ENCODE measurements at regions of chr2 and their contacts with region 1.

Region 1: GRCh38 chr2:241315093-241315878 is at the start of gene HDLBP:
- DNase-seq: peak; percentile 96
- ATAC-seq: peak; percentile 80
- H3K4me3 ChIP-seq: peak within 1 kb of the TSS; percentile 90
- H3K27ac ChIP-seq: peak within 1 kb of the TSS; percentile 95
- H3K4me1 ChIP-seq: peaks cover 17% of the 10 kb centered on the region
- H3K27me3 ChIP-seq: no peaks in the 10 kb centered on the region
- CTCF ChIP-seq: peak; percentile 12 to 39 (median 25); a peak in 4 of 6 replicates
- EP300 ChIP-seq: peak; percentile 28 to 30; a peak in 2 of 4 replicates
- POLR2A ChIP-seq: peak; percentile 84
- RAD21 ChIP-seq: 0 out of 2 replicates have a peak, but pooled peaks have one; percentile 4
- polyA plus RNA-seq, gene HDLBP: 19.5 to 56.8 TPM

Region 2: DNA sequence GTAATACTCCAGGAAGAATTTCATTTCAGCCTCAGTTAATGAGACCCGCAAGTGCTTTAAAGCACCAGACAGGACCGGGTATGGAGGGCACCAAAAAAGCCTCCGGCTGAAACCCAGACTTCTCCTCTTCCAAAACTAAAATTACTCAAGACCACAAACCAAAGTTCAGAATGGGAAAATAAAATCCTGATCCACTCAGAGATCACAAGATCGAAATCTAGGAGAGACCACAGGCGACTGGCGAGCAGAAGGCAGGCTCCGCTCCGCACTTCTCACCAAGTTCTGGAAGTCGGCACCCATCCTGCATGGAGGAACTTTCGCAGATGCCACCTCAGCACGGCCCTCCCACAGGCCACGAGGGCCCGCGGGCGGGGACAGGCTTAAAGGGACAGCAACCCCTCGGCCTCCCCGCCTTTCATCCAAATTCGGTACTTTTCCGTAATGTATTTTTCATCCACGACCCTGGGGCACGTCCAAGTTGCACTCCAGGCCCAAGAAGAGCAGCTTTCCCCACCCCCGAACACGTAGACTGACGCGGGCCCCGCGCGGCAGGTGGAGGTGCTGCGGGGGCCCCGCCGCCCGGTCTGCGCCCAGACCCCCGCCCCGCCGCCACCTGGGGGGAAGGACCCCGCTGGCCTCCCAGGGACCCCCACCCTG is 43.5 kb before region 1 on chr2:
- CTCF ChIA-PET with region 1: interaction called, 4 read pairs
- POLR2A ChIA-PET with region 1: no interaction called
- RAD21 ChIA-PET with region 1: interaction called, 3 read pairs
- SMC1A ChIA-PET with region 1: interaction called, 5 read pairs
- in situ Hi-C with region 1: no loop called
- intact Hi-C with region 1: loop called (anchors 2 kb)
- DNase-seq: no peak
- ATAC-seq: peak; percentile 85
- H3K4me3 ChIP-seq: peak overlapping the region; percentile 75
- H3K27ac ChIP-seq: peak overlapping the region; percentile 79
- H3K4me1 ChIP-seq: peaks cover 17% of the 10 kb centered on the region
- H3K27me3 ChIP-seq: no peaks in the 10 kb centered on the region
- CTCF ChIP-seq: no peak
- EP300 ChIP-seq: no peak
- POLR2A ChIP-seq: peak; percentile 40
- RAD21 ChIP-seq: no peak

Region 3: GRCh38 chr2:241279413-241279812 is 35.9 kb before region 1 on chr2:
- CTCF ChIA-PET with region 1: interaction called, 5 read pairs
- POLR2A ChIA-PET with region 1: interaction called, 3 read pairs
- RAD21 ChIA-PET with region 1: interaction called, 4 read pairs
- SMC1A ChIA-PET with region 1: interaction called, 11 read pairs
- in situ Hi-C with region 1: no loop called
- intact Hi-C with region 1: no loop called
- DNase-seq: no peak
- ATAC-seq: no peak
- H3K4me3 ChIP-seq: no peak overlapping the region
- H3K27ac ChIP-seq: no peak overlapping the region; the same call in 1 of the 2 replicates
- H3K4me1 ChIP-seq: peaks cover 12% of the 10 kb centered on the region
- H3K27me3 ChIP-seq: no peaks in the 10 kb centered on the region
- CTCF ChIP-seq: no peak
- EP300 ChIP-seq: no peak
- POLR2A ChIP-seq: no peak
- RAD21 ChIP-seq: no peak

Region 4: DNA sequence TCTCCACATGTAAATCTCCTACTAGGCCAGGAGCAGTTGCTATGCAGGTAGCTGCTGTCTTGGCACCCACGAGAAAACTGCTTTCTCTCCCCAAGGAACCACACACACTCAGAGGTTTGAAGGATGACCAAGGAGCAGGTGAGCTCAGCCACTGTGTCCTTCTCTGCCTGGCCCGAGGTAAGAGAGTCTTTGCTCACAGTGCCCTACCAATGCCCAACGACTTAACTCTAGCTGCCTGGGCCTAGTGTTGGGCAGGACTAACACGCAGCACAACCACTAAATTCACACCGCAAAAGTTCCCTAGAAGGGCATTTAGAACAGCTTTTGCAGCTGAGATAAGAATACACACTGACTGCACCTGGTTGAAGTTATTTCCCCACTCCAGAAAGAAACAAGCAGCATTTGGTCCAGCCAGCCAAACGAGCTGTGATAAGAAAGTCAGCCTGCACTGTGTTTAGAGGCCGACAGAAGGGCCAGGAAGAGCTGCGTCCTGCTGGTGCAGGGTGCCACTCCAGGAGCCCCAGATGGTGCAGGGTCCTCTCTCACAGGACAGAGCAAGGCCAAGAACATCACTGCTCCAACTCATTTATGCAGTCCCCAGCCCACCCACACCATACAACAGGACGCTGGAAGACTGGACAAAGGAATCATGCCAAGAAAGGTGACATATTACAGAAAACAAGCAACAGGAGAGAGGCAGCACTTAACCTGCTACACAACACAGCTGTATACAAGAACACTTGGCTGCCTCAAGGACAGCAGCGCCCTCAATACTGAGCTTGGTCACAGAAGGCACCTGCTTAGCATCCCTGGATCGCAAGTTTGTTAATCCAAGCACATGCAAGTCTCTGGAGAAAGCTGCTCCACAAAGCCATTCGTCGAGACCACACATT is 12.3 kb before region 1 on chr2:
- CTCF ChIA-PET with region 1: interaction called, 13 read pairs
- POLR2A ChIA-PET with region 1: interaction called, 20 read pairs
- RAD21 ChIA-PET with region 1: interaction called, 11 read pairs
- SMC1A ChIA-PET with region 1: interaction called, 9 read pairs
- in situ Hi-C with region 1: no loop called
- intact Hi-C with region 1: no loop called
- DNase-seq: no peak
- ATAC-seq: 0 out of 3 replicates have a peak, but pooled peaks have one; percentile 4
- H3K4me3 ChIP-seq: no peak overlapping the region
- H3K27ac ChIP-seq: peak overlapping the region; percentile 24; the same call in 1 of the 2 replicates
- H3K4me1 ChIP-seq: peaks cover 19% of the 10 kb centered on the region
- H3K27me3 ChIP-seq: no peaks in the 10 kb centered on the region
- CTCF ChIP-seq: no peak
- EP300 ChIP-seq: no peak
- POLR2A ChIP-seq: no peak
- RAD21 ChIP-seq: no peak

Region 5: GRCh38 chr2:241372361-241372992 is 57.2 kb after region 1 on chr2:
- CTCF ChIA-PET with region 1: interaction called, 4 read pairs
- POLR2A ChIA-PET with region 1: interaction called, 12 read pairs
- RAD21 ChIA-PET with region 1: interaction called, 10 read pairs
- SMC1A ChIA-PET with region 1: interaction called, 4 read pairs
- in situ Hi-C with region 1: no loop called
- intact Hi-C with region 1: no loop called
- DNase-seq: no peak
- ATAC-seq: no peak
- H3K4me3 ChIP-seq: no peak overlapping the region
- H3K27ac ChIP-seq: no peak overlapping the region; the same call in 1 of the 2 replicates
- H3K4me1 ChIP-seq: peaks cover 43% of the 10 kb centered on the region
- H3K27me3 ChIP-seq: no peaks in the 10 kb centered on the region
- CTCF ChIP-seq: no peak
- EP300 ChIP-seq: no peak
- POLR2A ChIP-seq: no peak
- RAD21 ChIP-seq: no peak

Region 6: GRCh38 chr2:241489733-241490680 is 174.7 kb after region 1 on chr2:
- CTCF ChIA-PET with region 1: no interaction called
- POLR2A ChIA-PET with region 1: no interaction called
- RAD21 ChIA-PET with region 1: no interaction called
- SMC1A ChIA-PET with region 1: no interaction called
- in situ Hi-C with region 1: no loop called
- intact Hi-C with region 1: no loop called
- DNase-seq: no peak
- ATAC-seq: no peak
- H3K4me3 ChIP-seq: no peak overlapping the region
- H3K27ac ChIP-seq: no peak overlapping the region
- H3K4me1 ChIP-seq: no peaks in the 10 kb centered on the region
- H3K27me3 ChIP-seq: no peaks in the 10 kb centered on the region
- CTCF ChIP-seq: no peak
- EP300 ChIP-seq: no peak
- POLR2A ChIP-seq: no peak; the same call in 1 of the 2 replicates
- RAD21 ChIP-seq: no peak